Activated naive CD4-positive, alpha-beta T cell treated with anti-CD3 and anti-CD28 coated beads for 36 hours (primary cell): ENCODE measurements at regions of chr16 and their contacts with region 1.

Region 1: DNA sequence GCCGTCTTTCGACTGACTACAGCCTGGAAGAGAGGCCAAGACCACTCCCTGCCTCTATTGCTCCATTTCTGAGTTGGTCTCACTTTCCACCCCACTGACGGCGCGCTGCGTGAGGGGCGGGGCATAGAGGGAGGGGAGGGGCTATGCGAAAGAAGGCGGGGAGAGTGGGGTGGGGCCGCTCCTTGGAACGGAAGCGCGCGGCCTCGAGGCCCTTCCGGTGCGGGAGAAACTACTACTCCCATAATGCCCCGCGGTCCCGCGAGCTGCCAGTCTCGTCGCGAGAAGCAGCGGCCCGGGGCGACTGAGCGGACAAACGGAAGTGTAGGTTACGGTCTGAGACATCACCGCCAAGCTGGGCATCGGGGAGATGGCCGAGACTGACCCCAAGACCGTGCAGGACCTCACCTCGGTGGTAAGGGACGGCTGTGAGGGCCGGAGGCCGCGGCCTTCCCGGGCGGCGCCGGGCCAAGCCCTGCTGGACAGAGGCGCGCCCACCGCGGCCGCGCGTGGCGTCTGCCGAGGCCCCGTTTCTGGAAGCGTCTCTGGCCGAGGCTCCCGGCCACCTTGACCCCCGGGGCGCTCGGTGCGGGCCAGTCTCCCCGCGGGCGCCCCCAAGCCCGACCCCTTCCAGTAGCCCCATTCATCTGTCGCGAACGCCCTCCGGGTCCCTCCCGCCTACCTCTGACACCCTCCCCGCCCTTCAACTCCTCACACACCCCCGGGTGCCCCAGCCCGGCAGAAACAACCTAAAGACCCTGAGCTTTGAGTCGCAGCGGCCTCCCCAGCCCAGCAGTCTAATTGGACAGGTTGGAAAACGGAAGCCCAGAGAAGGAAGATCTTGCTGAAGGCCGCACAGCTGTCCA is at the start of gene HSBP1:
- DNase-seq: peak; percentile 95
- H3K4me3 Mint-ChIP-seq: peak within 1 kb of the TSS; percentile 98
- H3K27ac Mint-ChIP-seq: peak within 1 kb of the TSS; percentile 95
- H3K4me1 Mint-ChIP-seq: peaks cover 37% of the 10 kb centered on the region
- H3K27me3 Mint-ChIP-seq: no peaks in the 10 kb centered on the region
- total RNA-seq, gene HSBP1: 72.1 to 72.8 TPM

Region 2: DNA sequence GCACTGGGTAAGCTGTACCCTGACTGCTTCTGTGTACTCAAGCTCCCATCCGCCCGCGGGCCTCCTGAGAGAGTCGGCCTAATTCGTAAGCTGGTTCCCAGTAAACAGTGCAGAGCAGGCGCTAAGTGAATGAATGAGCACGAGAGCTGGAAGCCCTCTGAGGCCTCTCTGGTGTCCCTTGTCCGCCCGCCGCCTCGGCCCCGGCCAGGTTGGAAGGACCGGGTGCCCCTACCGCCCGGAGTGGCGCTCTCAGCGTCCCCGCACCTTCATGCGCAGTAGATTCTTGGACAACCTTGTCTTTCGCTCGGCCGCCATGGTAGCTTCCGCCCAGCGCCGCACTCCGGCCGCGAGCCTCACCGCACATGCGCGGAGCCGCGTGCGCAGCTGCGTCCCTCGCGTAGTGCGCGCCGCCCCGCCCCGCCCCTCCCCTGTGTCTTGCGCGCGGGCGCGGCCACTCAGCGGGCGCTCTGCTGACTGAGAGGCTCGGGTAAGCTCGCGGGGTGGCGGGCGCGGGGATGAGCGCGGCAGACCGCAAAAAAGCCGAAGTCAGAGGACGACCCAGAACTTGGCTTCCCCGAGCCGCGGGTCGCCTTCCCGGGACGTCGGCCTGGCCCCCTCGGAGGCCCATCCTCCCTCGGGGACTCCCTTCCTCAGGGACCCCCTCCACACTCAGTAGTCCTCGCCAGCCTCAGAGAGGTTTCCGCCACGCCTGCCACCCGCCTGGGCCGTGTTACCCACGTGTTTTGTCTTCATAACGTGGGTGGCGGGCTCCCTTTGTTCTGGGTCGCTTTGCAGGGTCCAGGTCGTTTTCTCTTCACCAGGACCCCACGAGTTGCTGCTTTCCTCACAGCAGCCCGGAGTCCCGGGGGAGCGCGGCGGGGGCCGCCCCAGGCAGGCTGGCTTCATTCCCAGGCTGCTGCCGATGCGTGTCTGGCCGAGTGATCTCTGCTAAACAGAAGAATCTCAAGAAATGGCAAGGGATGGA is 1637.8 kb before region 1 on chr16 and contains the start of gene MPHOSPH6:
- CTCF ChIA-PET with region 1: no interaction called
- intact Hi-C with region 1: loop called (anchors 10 kb)
- DNase-seq: peak; percentile 90
- H3K4me3 Mint-ChIP-seq: peak within 1 kb of the TSS; percentile 93
- H3K27ac Mint-ChIP-seq: peak within 1 kb of the TSS; percentile 90
- H3K4me1 Mint-ChIP-seq: peaks cover 22% of the 10 kb centered on the region
- H3K27me3 Mint-ChIP-seq: peaks cover 23% of the 10 kb centered on the region
- total RNA-seq, gene MPHOSPH6: 34.8 to 36.9 TPM